Heart left ventricle (tissue), 16 donors: ENCODE measurements at regions of chr13 and their contacts with region 1.

Region 1: DNA sequence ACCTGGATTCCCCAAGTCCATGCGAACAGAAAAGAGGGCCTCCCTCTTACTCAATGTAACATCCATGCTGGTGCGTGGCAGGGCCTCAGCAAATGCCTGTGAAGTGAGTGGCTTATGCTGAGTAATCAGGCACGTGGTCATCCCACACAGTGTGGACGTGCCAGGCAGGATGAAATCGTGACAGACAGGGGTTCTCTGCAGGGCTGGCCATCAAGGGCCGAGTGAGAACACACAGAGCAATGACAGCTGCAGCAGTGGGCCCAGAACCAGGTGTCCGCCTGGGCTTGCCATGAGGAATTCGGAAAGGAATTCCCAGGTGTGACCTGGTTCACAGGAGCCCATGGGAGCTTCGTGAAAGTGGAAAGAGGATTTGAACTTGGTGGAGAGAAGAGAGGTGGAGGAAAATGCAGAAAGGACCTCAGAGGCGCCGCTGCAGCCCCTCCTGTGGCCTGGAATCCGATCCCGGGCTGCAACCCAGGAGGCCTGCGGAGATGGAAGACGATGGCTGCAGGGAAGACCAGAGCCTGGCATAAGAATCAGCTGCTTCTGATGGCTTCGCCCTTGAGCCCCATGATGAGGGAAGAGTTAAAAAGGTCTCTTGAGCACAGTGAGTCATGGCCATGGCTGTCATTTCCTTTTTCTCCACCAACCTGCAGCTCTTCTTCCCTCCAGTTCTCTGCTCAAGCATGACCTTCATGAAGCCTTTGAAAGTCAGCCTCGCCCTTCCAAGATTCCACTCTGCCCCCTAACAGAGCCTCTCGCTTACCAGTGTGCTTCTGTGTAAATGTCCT is 34.6 kb upstream of the SOX1 start:
- DNase-seq: no peak
- ATAC-seq: peak in 3 of 4 donors; percentile 22 to 38 (median 22)
- H3K4me3 ChIP-seq: no peak overlapping the region
- H3K27ac ChIP-seq: no peak overlapping the region
- H3K4me1 ChIP-seq: no peaks in the 10 kb centered on the region
- H3K27me3 ChIP-seq: peaks cover 0 to 7% (median 0%) of the 10 kb centered on the region in 9 donors
- CTCF ChIP-seq: no peak
- POLR2A ChIP-seq: no peak

Region 2: GRCh38 chr13:111976474-111977178 is 55.8 kb before region 1 on chr13:
- intact Hi-C with region 1: no loop called
- DNase-seq: no peak
- ATAC-seq: no peak
- H3K4me3 ChIP-seq: no peak overlapping the region
- H3K27ac ChIP-seq: no peak overlapping the region
- H3K4me1 ChIP-seq: peaks cover 0 to 14% (median 0%) of the 10 kb centered on the region in 12 donors
- H3K27me3 ChIP-seq: peaks cover under 1 to 38% (median 15%) of the 10 kb centered on the region in 9 donors
- CTCF ChIP-seq: no peak
- POLR2A ChIP-seq: no peak

Region 3: DNA sequence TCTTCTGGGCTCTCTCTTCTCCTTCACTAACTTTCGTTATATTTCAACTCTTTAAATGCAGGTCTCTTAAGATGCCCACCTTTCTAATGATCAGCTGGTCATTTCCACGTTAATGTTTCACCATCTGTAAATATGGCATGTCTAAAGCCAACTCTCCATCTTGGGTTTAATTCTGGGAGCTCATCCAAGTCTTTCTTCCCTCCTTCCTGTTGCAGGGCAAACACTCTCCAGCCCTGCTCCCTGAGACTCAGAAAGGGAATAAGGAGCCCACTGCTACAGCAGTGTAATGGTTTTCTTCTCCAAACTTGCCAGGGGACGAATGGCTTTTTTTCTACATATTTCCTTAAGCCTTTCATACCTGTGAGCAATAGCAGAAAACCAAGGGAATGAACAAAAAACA is 38.7 kb before region 1 on chr13:
- intact Hi-C with region 1: loop called in 1 of 10 experiments (anchors 2 kb)
- DNase-seq: no peak
- ATAC-seq: no peak
- H3K4me3 ChIP-seq: no peak overlapping the region
- H3K27ac ChIP-seq: no peak overlapping the region
- H3K4me1 ChIP-seq: no peaks in the 10 kb centered on the region
- H3K27me3 ChIP-seq: peaks cover 0 to 36% (median 3%) of the 10 kb centered on the region in 9 donors
- CTCF ChIP-seq: no peak
- POLR2A ChIP-seq: no peak